Activated CD4-positive, alpha-beta T cell treated with anti-CD3 and anti-CD28 coated beads for 36 hours (primary cell): ENCODE measurements at regions of chr1 and their contacts with region 1.

Region 1: GRCh38 chr1:23403735-23404486 is 20.6 kb downstream of the TCEA3 start:
- DNase-seq: peak; percentile 94
- ATAC-seq: peak; percentile 98
- H3K4me3 Mint-ChIP-seq: no peak overlapping the region
- H3K27ac Mint-ChIP-seq: no peak overlapping the region
- H3K4me1 Mint-ChIP-seq: peaks cover 10% of the 10 kb centered on the region
- H3K27me3 Mint-ChIP-seq: no peaks in the 10 kb centered on the region

Region 2: DNA sequence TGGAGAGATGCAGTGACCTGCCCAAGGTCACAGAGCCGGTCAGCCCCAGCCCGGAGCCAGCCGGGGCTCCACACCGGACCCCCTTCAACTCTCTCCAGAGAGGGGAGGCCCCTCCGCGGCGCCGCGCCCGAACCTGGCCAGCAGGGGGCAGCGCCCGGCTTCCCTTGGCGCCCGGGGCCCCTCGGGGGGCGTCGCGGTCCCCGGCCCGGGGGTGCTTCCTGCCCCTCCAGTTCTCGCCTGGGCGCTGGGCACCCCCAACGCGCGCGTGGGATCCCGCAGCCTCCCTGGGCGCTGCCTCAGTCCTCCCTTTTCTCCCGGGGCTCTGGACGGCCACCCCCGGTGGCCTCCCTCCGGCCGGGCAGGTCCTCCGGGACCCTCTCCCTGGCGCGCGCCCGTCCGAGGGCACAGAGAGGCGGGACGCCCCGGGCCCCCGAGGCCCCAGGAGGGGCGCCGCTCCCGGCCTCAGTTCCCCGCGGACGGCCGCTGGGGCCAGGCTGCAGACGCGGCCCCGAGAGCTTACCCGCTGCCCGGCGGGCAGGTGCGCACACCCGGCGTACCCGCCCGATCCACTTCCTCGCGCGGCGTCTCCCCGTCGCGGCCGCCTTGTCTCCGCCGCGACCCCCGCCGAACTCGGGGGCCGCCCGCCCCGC is 187.0 kb before region 1 on chr1:
- CTCF ChIA-PET with region 1: interaction called, 3 read pairs
- POLR2A ChIA-PET with region 1: no interaction called
- intact Hi-C with region 1: loop called (anchors 2 to 10 kb)
- DNase-seq: peak; percentile 58
- ATAC-seq: peak; percentile 68
- H3K4me3 Mint-ChIP-seq: peak overlapping the region; percentile 1
- H3K27ac Mint-ChIP-seq: no peak overlapping the region
- H3K4me1 Mint-ChIP-seq: peaks cover 2% of the 10 kb centered on the region
- H3K27me3 Mint-ChIP-seq: peaks cover 50% of the 10 kb centered on the region

Region 3: DNA sequence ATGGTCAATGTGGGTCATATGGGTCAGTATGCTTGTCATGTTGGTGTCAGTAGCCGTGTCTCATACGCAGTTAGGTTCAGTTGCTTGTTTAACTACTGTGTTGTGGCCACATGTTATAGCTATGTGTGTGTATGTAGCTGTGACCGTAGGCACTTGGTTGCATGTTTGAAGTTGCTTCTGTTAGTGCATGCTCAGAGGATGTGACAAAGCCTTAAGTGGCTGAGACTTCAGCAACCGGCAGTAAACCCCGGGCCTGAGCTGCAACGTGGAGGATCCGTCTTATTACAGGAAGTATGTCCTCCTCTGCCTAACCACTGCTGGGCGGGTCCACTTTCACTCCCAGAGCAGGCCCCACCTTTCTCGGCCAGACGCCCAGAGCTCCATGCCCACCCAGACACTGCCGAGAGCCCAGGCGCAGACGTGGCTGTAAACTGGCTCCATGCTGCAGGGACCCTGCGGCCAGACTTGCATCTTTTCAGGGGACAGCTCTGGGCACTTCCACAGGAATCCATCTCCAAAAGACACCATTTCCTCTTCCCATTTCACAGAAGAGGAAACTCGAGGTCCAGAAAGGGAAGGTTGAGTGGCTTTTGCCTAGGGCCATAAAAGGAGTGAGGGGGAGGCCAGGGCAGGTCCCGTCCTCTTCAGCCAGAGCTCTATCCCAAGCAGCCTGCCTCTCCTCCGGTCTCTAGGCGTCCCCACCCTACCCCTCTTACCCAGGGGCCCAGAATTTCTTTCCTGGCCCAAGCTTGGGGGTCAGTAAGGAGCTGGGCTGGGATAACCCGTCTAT is 18.5 kb after region 1 on chr1:
- CTCF ChIA-PET with region 1: interaction called, 19 read pairs
- POLR2A ChIA-PET with region 1: interaction called, 4 read pairs
- intact Hi-C with region 1: no loop called
- DNase-seq: peak; percentile 68
- ATAC-seq: peak; percentile 79
- H3K4me3 Mint-ChIP-seq: no peak overlapping the region
- H3K27ac Mint-ChIP-seq: peak overlapping the region; percentile 22
- H3K4me1 Mint-ChIP-seq: peaks cover 22% of the 10 kb centered on the region
- H3K27me3 Mint-ChIP-seq: peaks cover 2% of the 10 kb centered on the region